ENCODE measurements at regions of chr16 and their contacts with region 1.

Region 1: GRCh38 chr16:68289621-68290329 is 21.0 kb downstream of the SLC7A6OS start:
- DNase-seq: peak; percentile 84
- H3K4me3 Mint-ChIP-seq: peak overlapping the region; percentile 12
- H3K27ac Mint-ChIP-seq: peak overlapping the region; percentile 93
- H3K4me1 Mint-ChIP-seq: peaks cover 84% of the 10 kb centered on the region
- H3K27me3 Mint-ChIP-seq: no peaks in the 10 kb centered on the region

Region 2: DNA sequence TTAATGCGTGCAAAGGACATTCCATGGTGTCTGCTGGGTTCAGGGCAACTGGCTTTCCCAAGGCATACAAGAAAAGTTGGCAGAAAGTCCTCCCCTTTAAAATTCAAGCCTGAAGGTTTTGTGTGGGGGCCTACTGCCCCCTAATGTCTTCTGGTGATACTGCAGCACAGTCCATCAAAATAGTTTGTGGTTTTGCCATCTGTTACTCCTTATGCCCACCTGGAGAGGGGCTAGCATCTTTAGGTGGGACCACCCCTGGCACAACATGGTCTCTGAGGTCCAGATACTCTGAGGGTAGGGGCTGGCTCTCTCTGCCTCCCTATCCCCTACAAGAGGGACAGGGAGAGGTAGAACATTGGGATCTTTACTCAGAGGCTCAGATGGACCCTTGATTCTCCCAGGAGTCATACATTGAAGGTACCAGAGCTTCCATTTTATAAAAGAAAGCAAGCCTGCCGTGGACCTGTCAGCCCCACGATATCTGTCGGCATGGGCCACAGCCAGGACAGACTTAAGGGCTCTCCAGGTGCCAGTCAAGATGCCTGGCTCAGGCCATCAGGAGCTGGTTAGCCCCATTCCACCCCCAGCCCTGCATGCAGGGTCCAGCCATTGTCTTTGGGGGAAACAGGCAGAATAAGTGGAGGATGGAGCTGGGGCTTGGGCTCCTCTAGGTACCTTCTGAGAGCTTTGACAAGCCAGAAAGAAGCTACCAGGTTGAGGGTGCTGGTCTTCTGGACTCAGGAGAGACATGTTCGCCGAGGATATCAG is 60.2 kb before region 1 on chr16:
- CTCF ChIA-PET with region 1: no interaction called
- POLR2A ChIA-PET with region 1: no interaction called
- intact Hi-C with region 1: no loop called
- DNase-seq: peak; percentile 62
- H3K4me3 Mint-ChIP-seq: no peak overlapping the region
- H3K27ac Mint-ChIP-seq: peak overlapping the region; percentile 43
- H3K4me1 Mint-ChIP-seq: peaks cover 37% of the 10 kb centered on the region
- H3K27me3 Mint-ChIP-seq: no peaks in the 10 kb centered on the region

Region 3: GRCh38 chr16:68270353-68270752 is 19.4 kb before region 1 on chr16:
- CTCF ChIA-PET with region 1: interaction called, 237 read pairs
- POLR2A ChIA-PET with region 1: interaction called, 23 read pairs
- intact Hi-C with region 1: loop called (anchors 1 kb)
- DNase-seq: no peak
- H3K4me3 Mint-ChIP-seq: no peak overlapping the region
- H3K27ac Mint-ChIP-seq: peak overlapping the region; percentile 93
- H3K4me1 Mint-ChIP-seq: peaks cover 86% of the 10 kb centered on the region
- H3K27me3 Mint-ChIP-seq: no peaks in the 10 kb centered on the region

Region 4: GRCh38 chr16:68275611-68276191 is 14.1 kb before region 1 on chr16:
- CTCF ChIA-PET with region 1: interaction called, 6 read pairs
- POLR2A ChIA-PET with region 1: interaction called, 18 read pairs
- intact Hi-C with region 1: loop called (anchors 1 kb)
- DNase-seq: peak; percentile 66
- H3K4me3 Mint-ChIP-seq: no peak overlapping the region
- H3K27ac Mint-ChIP-seq: peak overlapping the region; percentile 93
- H3K4me1 Mint-ChIP-seq: peaks cover 67% of the 10 kb centered on the region
- H3K27me3 Mint-ChIP-seq: no peaks in the 10 kb centered on the region

Region 5: GRCh38 chr16:68310761-68311511 is 21.2 kb after region 1 on chr16 and contains the starts of genes PRMT7 and SLC7A6OS:
- CTCF ChIA-PET with region 1: interaction called, 10 read pairs
- POLR2A ChIA-PET with region 1: interaction called, 10 read pairs
- intact Hi-C with region 1: loop called (anchors 1 kb)
- DNase-seq: peak; percentile 96
- H3K4me3 Mint-ChIP-seq: peak within 1 kb of the TSS; percentile 89
- H3K27ac Mint-ChIP-seq: peak within 1 kb of the TSS; percentile 93
- H3K4me1 Mint-ChIP-seq: peaks cover 52% of the 10 kb centered on the region
- H3K27me3 Mint-ChIP-seq: no peaks in the 10 kb centered on the region
- total RNA-seq, gene PRMT7: 60.4 to 62.8 TPM
- total RNA-seq, gene SLC7A6OS: 20.6 to 22.2 TPM

Region 6: GRCh38 chr16:68490829-68491575 is 201.2 kb after region 1 on chr16:
- CTCF ChIA-PET with region 1: no interaction called
- POLR2A ChIA-PET with region 1: no interaction called
- intact Hi-C with region 1: no loop called
- DNase-seq: no peak
- H3K4me3 Mint-ChIP-seq: no peak overlapping the region
- H3K27ac Mint-ChIP-seq: no peak overlapping the region
- H3K4me1 Mint-ChIP-seq: no peaks in the 10 kb centered on the region
- H3K27me3 Mint-ChIP-seq: no peaks in the 10 kb centered on the region

Measured in activated CD4-positive, alpha-beta memory T cell treated with anti-CD3 and anti-CD28 coated beads for 36 hours (primary cell).